Activated B cell treated with CpG ODN at 0.5 μM for 24 hours (primary cell): ENCODE measurements at regions of chr2 and their contacts with region 1.

Region 1: DNA sequence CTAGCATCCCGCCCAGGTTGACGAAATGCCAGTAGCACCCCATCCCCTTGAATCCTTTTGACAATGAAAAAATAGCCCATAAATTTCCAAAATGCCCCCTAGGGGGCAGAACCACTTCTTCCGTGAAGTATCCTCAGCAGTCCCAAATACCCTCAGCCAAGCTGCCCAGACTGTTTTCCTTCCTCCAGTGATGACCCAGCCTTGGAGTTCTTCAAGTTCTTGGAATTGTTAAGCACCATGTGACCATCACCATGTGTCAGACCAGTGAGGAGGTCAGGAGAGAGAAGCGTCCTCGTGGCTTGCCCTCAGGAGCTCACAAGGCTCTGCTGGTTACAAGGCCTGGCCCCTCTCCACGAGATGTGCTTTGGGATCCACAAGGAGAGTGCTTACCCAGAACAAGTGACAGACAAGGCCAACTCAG is 1.4 kb upstream of the SLC23A3 start:
- DNase-seq: no peak
- ATAC-seq: peak; percentile 40
- H3K4me3 Mint-ChIP-seq: no peak overlapping the region
- H3K27ac Mint-ChIP-seq: no peak overlapping the region
- H3K4me1 Mint-ChIP-seq: peaks cover 21% of the 10 kb centered on the region
- H3K27me3 Mint-ChIP-seq: no peaks in the 10 kb centered on the region
- CTCF ChIP-seq: no peak

Region 2: DNA sequence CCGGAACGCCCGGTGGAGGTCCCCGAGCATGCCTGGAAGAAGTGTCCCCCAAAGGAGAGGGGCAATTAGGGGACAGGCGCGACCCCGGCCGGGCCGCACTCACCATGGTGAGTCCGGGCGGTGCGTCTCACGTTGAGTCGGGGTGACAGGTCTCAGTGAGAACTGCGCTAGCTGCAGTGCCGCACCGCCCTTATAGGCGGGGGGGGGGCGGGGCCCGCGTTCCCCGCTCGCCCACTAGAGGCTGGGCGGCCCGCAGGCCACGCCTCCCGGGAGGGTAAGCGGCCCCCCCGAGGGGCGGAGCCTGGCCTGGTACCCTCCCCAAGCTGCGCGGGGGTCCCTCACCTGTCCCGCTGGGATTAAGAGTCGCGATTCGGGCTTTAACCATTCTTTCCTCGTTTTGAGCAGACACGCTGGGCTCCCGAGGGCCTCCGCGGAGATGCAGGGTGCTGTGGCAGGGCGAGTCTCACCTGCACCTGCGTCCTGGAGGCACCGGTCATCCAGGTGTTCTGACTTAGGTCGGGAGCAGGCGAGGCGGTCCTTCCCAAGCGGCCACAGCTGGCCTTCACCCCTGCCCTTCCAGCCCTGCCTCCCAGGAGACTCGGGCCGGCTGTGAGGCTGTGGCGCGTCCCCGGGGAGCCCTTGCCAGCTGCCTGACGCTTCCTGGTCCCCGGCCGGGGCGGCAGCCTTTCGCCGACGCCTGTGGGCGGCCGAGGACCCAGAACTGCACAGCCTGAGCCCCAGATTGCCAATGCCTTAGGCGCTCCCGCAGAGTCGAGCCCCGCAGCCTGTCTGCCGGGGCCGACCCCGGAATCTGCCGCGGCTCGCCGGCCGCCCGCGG is 82.7 kb after region 1 on chr2 and contains the start of gene TUBA4A:
- CTCF ChIA-PET with region 1: interaction called, 7 read pairs
- POLR2A ChIA-PET with region 1: interaction called, 85 read pairs
- intact Hi-C with region 1: no loop called
- DNase-seq: peak; percentile 90
- ATAC-seq: peak; percentile 69
- H3K4me3 Mint-ChIP-seq: peak within 1 kb of the TSS; percentile 82
- H3K27ac Mint-ChIP-seq: peak within 1 kb of the TSS; percentile 98
- H3K4me1 Mint-ChIP-seq: peaks cover 53% of the 10 kb centered on the region
- H3K27me3 Mint-ChIP-seq: no peaks in the 10 kb centered on the region
- CTCF ChIP-seq: no peak
- total RNA-seq, gene TUBA4A: 184 and 192 TPM in 2 replicates